HEK293 (cell line): ENCODE measurements at regions of chr19 and their contacts with region 1.

Region 1: GRCh38 chr19:44723952-44724319 is 24.6 kb upstream of the BCL3 start:
- H3K4me3 ChIP-seq: no peak overlapping the region
- H3K27ac ChIP-seq: no peak overlapping the region
- H3K4me1 ChIP-seq: peaks cover 3% of the 10 kb centered on the region; the same call in 1 of the 2 replicates
- CTCF ChIP-seq: peak; percentile 90

Region 2: DNA sequence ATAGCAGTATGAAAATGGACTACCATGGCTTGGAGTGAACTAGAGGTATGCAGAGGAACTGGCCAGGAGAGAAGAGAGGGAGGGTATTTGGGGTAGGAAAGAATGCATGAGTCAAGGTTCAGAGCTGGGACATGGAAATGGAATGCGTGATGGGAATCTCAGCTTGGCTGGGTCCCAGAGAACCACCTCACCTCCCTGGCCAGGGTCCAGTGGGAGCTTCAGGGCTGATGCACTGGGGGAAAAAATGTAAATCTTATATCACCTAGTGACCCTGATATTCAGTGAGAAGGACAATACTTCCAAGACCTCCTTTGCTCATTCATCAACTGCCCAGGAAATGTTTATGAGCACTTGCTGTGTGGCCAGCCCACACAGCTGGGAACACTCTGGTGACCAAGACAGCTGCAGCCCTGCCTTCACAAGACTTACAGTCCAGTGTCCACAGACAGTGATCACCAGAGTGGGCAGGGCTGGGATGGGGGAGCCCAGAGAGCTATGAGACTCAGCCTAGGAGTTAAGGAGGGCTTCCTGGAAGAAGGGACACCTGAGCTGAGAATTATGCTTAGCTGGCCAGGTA is 97.8 kb before region 1 on chr19:
- CTCF ChIA-PET with region 1: no interaction called
- POLR2A ChIA-PET with region 1: no interaction called
- H3K4me3 ChIP-seq: no peak overlapping the region
- H3K27ac ChIP-seq: no peak overlapping the region
- H3K4me1 ChIP-seq: no peaks in the 10 kb centered on the region
- CTCF ChIP-seq: no peak

Region 3: GRCh38 chr19:44677019-44677821 is 46.7 kb before region 1 on chr19:
- CTCF ChIA-PET with region 1: interaction called, 12 read pairs
- POLR2A ChIA-PET with region 1: no interaction called
- H3K4me3 ChIP-seq: no peak overlapping the region
- H3K27ac ChIP-seq: no peak overlapping the region
- H3K4me1 ChIP-seq: 0 out of 2 replicates have a peak, but pooled peaks cover 2% of the 10 kb centered on the region
- CTCF ChIP-seq: no peak

Region 4: GRCh38 chr19:44734986-44735385 is 11.1 kb after region 1 on chr19:
- CTCF ChIA-PET with region 1: interaction called, 31 read pairs
- POLR2A ChIA-PET with region 1: no interaction called
- H3K4me3 ChIP-seq: no peak overlapping the region
- H3K27ac ChIP-seq: no peak overlapping the region
- H3K4me1 ChIP-seq: no peaks in the 10 kb centered on the region
- CTCF ChIP-seq: no peak

Region 5: DNA sequence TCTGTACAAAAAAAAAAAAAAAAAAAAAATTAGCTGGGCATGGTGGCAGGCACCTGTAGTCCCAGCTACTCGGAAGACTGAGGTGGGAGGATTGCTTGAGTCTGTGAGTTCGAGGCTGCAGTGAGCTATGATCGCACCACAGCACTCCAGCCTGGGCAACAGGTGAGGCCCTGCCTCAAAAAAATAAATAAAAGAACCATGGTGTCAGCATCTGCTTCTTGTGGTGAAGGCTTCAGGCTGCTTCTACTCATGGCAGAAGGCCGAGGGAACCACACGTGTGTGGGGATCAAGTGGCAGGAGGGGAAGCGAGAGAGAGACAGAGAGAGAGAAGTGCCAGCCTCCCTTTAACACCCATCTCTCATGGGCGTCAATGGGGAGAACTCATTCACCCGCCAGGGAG is 38.1 kb after region 1 on chr19:
- CTCF ChIA-PET with region 1: interaction called, 453 read pairs
- POLR2A ChIA-PET with region 1: no interaction called
- H3K4me3 ChIP-seq: no peak overlapping the region
- H3K27ac ChIP-seq: no peak overlapping the region
- H3K4me1 ChIP-seq: no peaks in the 10 kb centered on the region
- CTCF ChIP-seq: no peak

Region 6: DNA sequence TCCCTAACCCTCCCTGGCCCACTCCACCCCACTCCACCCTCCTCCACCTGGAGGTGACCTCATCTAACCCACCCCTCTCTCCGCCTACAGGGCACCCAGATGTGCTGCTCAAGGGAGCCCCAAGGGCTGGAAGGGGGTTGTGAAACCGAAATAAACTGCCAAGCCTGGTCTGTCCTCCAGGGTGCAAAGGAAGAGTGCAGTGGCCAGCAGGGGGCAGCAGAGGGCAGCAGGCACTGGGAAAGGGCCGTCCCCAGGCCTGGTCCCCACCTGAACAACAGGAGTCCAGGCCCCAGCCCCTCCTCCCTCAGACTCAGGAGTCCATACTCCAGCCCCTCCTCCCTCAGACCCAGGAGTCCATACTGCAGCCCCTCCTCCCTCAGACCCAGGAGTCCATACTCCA is 76.5 kb after region 1 on chr19:
- CTCF ChIA-PET with region 1: interaction called, 15 read pairs
- POLR2A ChIA-PET with region 1: no interaction called
- H3K4me3 ChIP-seq: no peak overlapping the region
- H3K27ac ChIP-seq: no peak overlapping the region
- H3K4me1 ChIP-seq: no peaks in the 10 kb centered on the region; the same call in 1 of the 2 replicates
- CTCF ChIP-seq: peak; percentile 98

Region 7: DNA sequence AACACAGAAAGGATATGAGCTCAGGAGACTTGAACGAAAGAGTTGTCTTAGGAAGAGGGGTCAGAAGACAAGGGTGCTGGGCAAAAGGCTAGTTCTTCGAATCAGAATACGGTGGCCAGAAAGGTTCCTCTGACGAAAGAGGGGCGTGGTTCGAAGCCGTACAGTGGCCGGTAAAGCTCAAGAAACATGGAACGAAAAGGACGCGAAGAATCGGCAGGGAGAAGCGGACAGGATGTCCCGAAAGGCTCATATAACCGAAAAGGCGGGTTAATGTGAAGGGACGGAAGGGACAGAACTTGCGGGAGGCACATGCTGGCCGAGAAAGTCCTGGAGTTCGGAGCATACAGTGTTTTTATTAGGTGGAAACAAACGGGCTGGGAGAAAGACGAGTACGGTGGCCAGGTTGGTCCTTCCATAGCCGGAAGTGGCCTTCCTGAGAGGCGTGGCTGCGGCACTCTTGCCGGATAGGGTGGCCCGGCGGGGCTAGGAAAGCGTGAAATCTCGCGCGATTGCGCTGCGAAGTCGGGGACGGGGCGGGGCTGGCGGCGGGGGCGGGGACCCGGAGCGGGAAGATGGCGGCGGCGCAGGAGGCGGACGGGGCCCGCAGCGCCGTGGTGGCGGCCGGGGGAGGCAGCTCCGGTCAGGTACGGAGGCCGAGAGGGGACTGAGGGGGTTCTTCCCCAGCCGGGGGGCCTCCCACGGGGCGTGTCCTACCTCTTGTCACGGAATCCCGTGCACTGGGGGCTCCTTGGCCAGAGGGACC is 231.1 kb after region 1 on chr19 and contains the start of gene CLPTM1:
- CTCF ChIA-PET with region 1: interaction called, 15 read pairs
- POLR2A ChIA-PET with region 1: no interaction called
- H3K4me3 ChIP-seq: peak within 1 kb of the TSS; percentile 79
- H3K27ac ChIP-seq: peak within 1 kb of the TSS; percentile 74
- H3K4me1 ChIP-seq: peaks cover 13% of the 10 kb centered on the region
- CTCF ChIP-seq: no peak; the same call in 1 of the 2 replicates